ENCODE measurements at regions of chr16 and their contacts with region 1.

Region 1: GRCh38 chr16:88662843-88663606 is at the start of gene MVD:
- DNase-seq: peak; percentile 96
- H3K4me3 Mint-ChIP-seq: peak within 1 kb of the TSS; percentile 93
- H3K27ac Mint-ChIP-seq: peak within 1 kb of the TSS; percentile 91
- H3K4me1 Mint-ChIP-seq: peaks cover 19% of the 10 kb centered on the region
- H3K27me3 Mint-ChIP-seq: no peaks in the 10 kb centered on the region
- total RNA-seq, gene MVD: 132 and 137 TPM in 2 replicates

Region 2: GRCh38 chr16:88650749-88651275 is 12.2 kb before region 1 on chr16 and contains the start of gene CYBA:
- intact Hi-C with region 1: loop called (anchors 1 kb)
- DNase-seq: peak; percentile 86
- H3K4me3 Mint-ChIP-seq: peak within 1 kb of the TSS; percentile 87
- H3K27ac Mint-ChIP-seq: peak within 1 kb of the TSS; percentile 95
- H3K4me1 Mint-ChIP-seq: peaks cover 12% of the 10 kb centered on the region
- H3K27me3 Mint-ChIP-seq: no peaks in the 10 kb centered on the region
- total RNA-seq, gene CYBA: 233 and 242 TPM in 2 replicates

Region 3: DNA sequence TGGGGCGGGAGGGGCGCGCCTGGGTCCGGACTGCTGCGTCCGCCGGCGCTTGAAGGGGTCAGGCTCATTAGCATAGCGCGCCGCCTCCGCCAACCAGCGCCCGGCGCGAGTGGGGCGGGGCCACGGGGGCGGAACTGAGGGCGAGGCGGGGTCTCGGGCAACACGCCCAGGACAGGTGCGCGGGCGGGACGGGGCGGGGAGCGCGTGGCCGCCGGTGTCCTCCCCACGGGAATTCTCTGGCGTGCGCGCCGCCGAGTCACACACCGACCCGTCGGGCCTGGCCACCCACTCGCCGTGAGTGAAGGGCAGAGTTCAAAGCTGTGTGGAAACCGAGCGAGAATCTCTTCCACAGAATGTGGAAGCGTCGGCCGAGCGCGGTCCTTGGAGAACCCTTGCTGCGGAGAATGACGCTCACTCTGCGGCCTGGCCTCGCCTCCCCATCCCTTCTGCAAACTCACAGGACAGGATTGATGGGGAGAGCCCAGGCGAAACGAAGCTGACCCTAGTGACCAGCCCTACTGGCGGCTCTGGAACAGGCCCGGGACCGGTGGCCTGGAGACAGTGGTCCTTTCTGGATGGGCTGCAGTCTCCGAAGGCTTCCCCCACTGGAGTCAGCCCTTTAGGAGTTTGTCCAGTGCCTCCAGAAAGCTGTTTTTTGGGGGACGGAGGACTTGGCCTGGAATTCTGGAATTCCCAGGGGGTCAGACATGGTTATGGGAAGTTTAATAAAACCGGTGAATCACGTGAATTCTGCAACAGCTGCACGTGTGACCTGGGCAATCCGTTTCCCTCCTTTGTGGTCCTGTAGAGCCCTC is 23.6 kb after region 1 on chr16 and contains the start of gene SNAI3:
- intact Hi-C with region 1: loop called (anchors 1 kb)
- DNase-seq: peak; percentile 85
- H3K4me3 Mint-ChIP-seq: peak within 1 kb of the TSS; percentile 74
- H3K27ac Mint-ChIP-seq: no peak within 1 kb of the TSS
- H3K4me1 Mint-ChIP-seq: peaks cover 32% of the 10 kb centered on the region
- H3K27me3 Mint-ChIP-seq: no peaks in the 10 kb centered on the region
- total RNA-seq, gene SNAI3: 2.0 and 2.3 TPM in 2 replicates

Region 4: DNA sequence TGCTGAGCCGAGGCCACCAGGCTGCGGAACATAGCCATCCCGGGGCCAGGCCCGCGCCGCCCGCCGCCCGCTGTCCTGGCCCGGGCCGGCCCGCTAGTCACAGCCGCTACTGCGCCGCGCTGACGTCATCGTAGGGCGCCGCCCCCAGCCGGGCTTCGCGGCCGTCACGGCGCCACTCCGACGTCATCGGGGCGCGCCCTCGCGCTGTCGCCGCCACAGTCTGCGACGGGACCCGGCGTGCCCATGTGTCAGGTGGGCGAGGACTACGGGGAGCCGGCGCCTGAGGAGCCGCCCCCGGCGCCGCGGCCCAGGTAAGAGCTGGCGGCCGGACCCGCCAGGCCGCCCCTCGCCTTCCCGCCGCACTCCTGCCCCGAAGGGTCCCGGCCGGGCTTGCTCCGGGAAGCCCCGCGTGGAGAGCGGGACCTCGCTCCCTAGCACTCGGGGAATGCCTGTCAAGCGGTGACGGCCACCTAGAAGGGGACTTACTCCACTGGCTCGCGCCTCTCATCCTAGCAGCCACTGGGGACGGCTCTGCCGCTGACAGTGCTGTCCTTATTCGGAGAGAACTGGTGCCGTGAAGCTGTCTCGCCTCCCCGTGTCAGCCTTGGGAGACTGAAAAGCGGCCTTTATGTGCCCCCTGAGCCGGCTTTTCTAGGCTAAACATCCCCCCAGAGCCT is 43.4 kb after region 1 on chr16 and contains the starts of genes CTU2 and RNF166:
- intact Hi-C with region 1: loop called (anchors 1 kb)
- DNase-seq: peak; percentile 89
- H3K4me3 Mint-ChIP-seq: peak within 1 kb of the TSS; percentile 87
- H3K27ac Mint-ChIP-seq: peak within 1 kb of the TSS; percentile 67
- H3K4me1 Mint-ChIP-seq: peaks cover 41% of the 10 kb centered on the region
- H3K27me3 Mint-ChIP-seq: no peaks in the 10 kb centered on the region
- total RNA-seq, gene CTU2: 43.8 and 43.9 TPM in 2 replicates
- total RNA-seq, gene RNF166: 39.9 and 52.1 TPM in 2 replicates

Measured in activated T-helper 2 cell treated with anti-CD3 and anti-CD28 coated beads, Interferon-gamma antibody, Interleukin-2, Interleukin-4, amounts not matched to agents 10 μg/mL and 5 μg/mL and 100 μg/mL, durations not matched to agents 14 hours and 24 hours and 36 hours (primary cell).